ENCODE measurements at regions of chr6 and their contacts with region 1.

Region 1: GRCh38 chr6:36759148-36759759 is 61.6 kb downstream of the RAB44 start:
- DNase-seq: peak; percentile 67 to 82 (median 77)
- H3K4me3 ChIP-seq: no peak overlapping the region
- H3K27ac ChIP-seq: no peak overlapping the region
- H3K4me1 ChIP-seq: peaks cover 0 to 24% (median under 1%) of the 10 kb centered on the region in 4 experiments
- H3K27me3 ChIP-seq: no peaks in the 10 kb centered on the region

Region 2: DNA sequence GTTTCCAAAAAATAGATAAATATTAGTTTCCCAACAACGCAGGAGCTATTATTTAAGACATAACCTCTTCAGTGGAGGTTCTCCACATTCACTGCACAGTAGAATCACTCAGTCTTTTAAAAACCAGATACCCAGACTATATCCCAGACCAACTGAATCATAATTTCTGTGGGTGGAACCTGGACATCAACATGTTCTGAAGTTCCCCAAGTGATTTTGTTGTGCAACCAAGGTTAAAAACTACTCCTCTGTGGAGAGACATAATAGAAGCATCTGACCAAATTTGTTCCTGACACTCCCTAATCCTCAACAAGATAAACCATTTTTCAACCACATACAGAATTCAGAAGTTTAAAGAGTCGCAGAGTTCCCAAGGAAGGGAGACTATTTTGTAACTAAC is 254.3 kb before region 1 on chr6:
- CTCF ChIA-PET with region 1: no interaction called
- POLR2A ChIA-PET with region 1: no interaction called
- DNase-seq: no peak
- H3K4me3 ChIP-seq: no peak overlapping the region
- H3K27ac ChIP-seq: no peak overlapping the region
- H3K4me1 ChIP-seq: no peaks in the 10 kb centered on the region
- H3K27me3 ChIP-seq: no peaks in the 10 kb centered on the region

Region 3: DNA sequence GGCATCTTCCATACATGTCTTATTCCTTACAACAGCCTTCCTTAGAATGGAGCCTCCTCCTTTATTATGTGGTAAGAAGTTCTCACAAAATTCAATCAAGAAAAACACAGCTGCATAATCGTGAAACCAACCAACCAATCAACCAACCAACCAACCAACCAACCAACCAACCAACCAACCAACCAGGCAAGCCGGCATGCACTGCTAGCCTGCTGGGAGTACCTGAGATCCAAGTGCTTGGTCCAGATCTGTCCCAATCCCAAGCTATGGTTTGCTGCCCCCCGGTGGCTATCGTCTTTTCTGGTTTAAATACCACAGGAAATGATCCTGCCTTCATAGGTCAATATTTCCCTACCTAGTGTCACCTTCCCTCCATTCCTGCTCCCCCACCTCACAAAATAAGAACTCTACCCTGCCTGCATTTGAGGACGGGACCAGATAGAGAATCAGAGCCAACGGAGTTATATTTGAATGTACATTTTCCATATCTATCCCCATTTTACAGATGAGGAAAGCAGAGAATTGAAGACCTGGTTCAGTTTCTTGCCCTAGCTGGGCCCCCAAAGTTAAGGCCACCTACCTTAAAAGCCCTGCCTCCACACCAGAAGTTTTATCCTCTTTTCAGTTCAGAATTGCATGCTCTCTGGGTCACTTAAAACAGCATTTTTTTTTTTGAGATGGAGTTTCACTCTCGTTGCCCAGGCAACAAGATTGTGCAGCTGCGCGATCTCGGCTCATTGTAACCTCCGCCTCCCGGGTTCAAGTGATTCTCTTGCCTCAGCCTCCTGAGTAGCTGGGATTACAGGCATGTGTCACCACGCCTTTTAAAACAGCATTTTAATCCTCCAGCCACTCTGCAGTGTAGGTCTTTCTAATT is 34.5 kb before region 1 on chr6:
- CTCF ChIA-PET with region 1: interaction called, 13 read pairs
- POLR2A ChIA-PET with region 1: no interaction called
- DNase-seq: peak; percentile 47 to 61 (median 50)
- H3K4me3 ChIP-seq: no peak overlapping the region
- H3K27ac ChIP-seq: no peak overlapping the region
- H3K4me1 ChIP-seq: peaks cover 0 to 17% (median 0%) of the 10 kb centered on the region in 4 experiments
- H3K27me3 ChIP-seq: no peaks in the 10 kb centered on the region

Region 4: GRCh38 chr6:36780442-36781177 is 21.4 kb after region 1 on chr6:
- CTCF ChIA-PET with region 1: interaction called, 59 read pairs
- POLR2A ChIA-PET with region 1: no interaction called
- DNase-seq: peak; percentile 28 to 83 (median 79)
- H3K4me3 ChIP-seq: no peak overlapping the region
- H3K27ac ChIP-seq: no peak overlapping the region
- H3K4me1 ChIP-seq: peaks cover 4 to 28% (median 10%) of the 10 kb centered on the region in 4 experiments
- H3K27me3 ChIP-seq: peaks cover 0 to 5% (median 0%) of the 10 kb centered on the region in 5 experiments